ENCODE measurements at regions of chr15 and their contacts with region 1.

Region 1: GRCh38 chr15:75349851-75350588 is 3.2 kb downstream of the NEIL1 start:
- DNase-seq: peak; percentile 87 to 88
- ATAC-seq: peak; percentile 75 to 92 (median 86)
- H3K4me3 ChIP-seq: no peak overlapping the region
- H3K4me3 Mint-ChIP-seq: peak overlapping the region; percentile 86
- H3K27ac ChIP-seq: peak overlapping the region; percentile 98
- H3K27ac Mint-ChIP-seq: peak overlapping the region; percentile 95 to 97
- H3K4me1 ChIP-seq: peaks cover 53% of the 10 kb centered on the region
- H3K4me1 Mint-ChIP-seq: peaks cover 34 to 47% of the 10 kb centered on the region in 2 donors
- H3K27me3 ChIP-seq: no peaks in the 10 kb centered on the region
- H3K27me3 Mint-ChIP-seq: no peaks in the 10 kb centered on the region
- CTCF ChIP-seq: no peak

Region 2: GRCh38 chr15:75090388-75090734 is 259.7 kb before region 1 on chr15:
- intact Hi-C with region 1: no loop called
- DNase-seq: no peak
- ATAC-seq: peak in 1 of 3 donors; percentile 65
- H3K4me3 ChIP-seq: no peak overlapping the region
- H3K4me3 Mint-ChIP-seq: no peak overlapping the region
- H3K27ac ChIP-seq: no peak overlapping the region
- H3K27ac Mint-ChIP-seq: no peak overlapping the region
- H3K4me1 ChIP-seq: no peaks in the 10 kb centered on the region
- H3K4me1 Mint-ChIP-seq: no peaks in the 10 kb centered on the region
- H3K27me3 ChIP-seq: no peaks in the 10 kb centered on the region
- H3K27me3 Mint-ChIP-seq: no peaks in the 10 kb centered on the region
- CTCF ChIP-seq: no peak

Region 3: DNA sequence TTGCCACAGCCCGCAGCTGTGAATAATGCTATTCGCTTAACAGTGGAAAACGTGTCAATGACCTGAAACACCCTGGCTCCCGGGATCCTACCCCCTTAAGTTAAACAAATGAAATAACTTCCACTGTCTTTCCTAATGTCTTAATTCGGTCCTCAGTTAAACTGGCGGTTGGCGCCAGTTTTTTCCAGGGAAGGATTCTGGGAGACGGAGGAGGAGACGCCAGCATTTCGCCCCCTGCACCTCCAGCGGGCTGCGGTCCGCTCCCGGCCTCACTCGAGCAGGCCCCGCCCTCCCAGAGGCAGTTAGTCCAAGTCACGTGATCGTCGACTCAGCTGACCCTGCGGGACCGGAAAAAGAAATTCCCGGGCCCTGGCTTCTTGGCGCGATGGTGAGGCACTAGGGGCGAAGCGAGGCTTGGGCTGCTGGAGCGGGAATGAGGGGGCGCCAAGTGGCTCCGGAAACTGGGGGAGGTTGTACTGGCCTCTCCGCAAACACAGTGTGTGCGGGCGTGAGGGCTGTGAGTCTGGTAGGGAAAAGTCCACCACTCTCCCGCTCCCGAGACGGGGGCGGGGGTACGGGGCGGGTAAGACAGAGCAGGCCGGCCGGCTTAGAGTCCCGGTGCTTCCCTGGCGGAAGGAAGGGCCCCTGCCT is 14.2 kb before region 1 on chr15 and contains the start of gene COMMD4:
- intact Hi-C with region 1: loop called (anchors 2 kb)
- DNase-seq: peak; percentile 60 to 82
- ATAC-seq: peak; percentile 37 to 46 (median 40)
- H3K4me3 ChIP-seq: peak within 1 kb of the TSS; percentile 80
- H3K4me3 Mint-ChIP-seq: peak within 1 kb of the TSS; percentile 97
- H3K27ac ChIP-seq: peak within 1 kb of the TSS; percentile 29
- H3K27ac Mint-ChIP-seq: peak within 1 kb of the TSS; percentile 88 to 90
- H3K4me1 ChIP-seq: peaks cover 29% of the 10 kb centered on the region
- H3K4me1 Mint-ChIP-seq: peaks cover 25 to 46% of the 10 kb centered on the region in 2 donors
- H3K27me3 ChIP-seq: no peaks in the 10 kb centered on the region
- H3K27me3 Mint-ChIP-seq: no peaks in the 10 kb centered on the region
- CTCF ChIP-seq: no peak
- total RNA-seq, gene COMMD4: 38.8 to 56.3 (median 46.8) TPM

Region 4: GRCh38 chr15:75367913-75368688 is 18.1 kb after region 1 on chr15 and contains the start of gene MAN2C1:
- intact Hi-C with region 1: loop called (anchors 1 kb)
- DNase-seq: peak; percentile 85 to 97
- ATAC-seq: peak; percentile 92 to 95 (median 92)
- H3K4me3 ChIP-seq: peak within 1 kb of the TSS; percentile 57
- H3K4me3 Mint-ChIP-seq: peak within 1 kb of the TSS; percentile 89
- H3K27ac ChIP-seq: peak within 1 kb of the TSS; percentile 93
- H3K27ac Mint-ChIP-seq: peak within 1 kb of the TSS; percentile 90 to 92
- H3K4me1 ChIP-seq: peaks cover 16% of the 10 kb centered on the region
- H3K4me1 Mint-ChIP-seq: peaks cover 14 to 21% of the 10 kb centered on the region in 2 donors
- H3K27me3 ChIP-seq: no peaks in the 10 kb centered on the region
- H3K27me3 Mint-ChIP-seq: no peaks in the 10 kb centered on the region
- CTCF ChIP-seq: peak; percentile 14
- total RNA-seq, gene MAN2C1: 375 to 476 (median 385) TPM

Region 5: DNA sequence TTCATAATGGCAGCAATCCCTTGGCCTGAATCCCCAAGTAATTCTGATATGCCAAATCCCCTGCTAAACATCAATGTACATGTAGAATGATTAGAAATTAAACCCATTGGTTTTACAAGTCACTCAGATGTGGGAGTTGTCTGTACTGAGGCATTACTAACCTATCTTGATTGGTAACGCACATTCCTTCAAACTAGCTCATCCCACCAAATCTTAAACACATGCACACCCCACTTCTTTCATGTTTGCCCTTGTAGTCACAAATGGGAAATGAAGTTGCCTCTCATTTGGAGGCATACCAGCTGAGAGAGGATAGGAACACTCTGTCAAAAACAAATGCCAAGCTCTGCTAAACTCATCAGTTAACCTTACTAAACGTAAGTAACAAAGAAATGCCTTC is 47.5 kb after region 1 on chr15:
- intact Hi-C with region 1: no loop called
- DNase-seq: no peak
- ATAC-seq: no peak
- H3K4me3 ChIP-seq: no peak overlapping the region
- H3K4me3 Mint-ChIP-seq: no peak overlapping the region
- H3K27ac ChIP-seq: no peak overlapping the region
- H3K27ac Mint-ChIP-seq: peak overlapping the region; percentile 4 to 22
- H3K4me1 ChIP-seq: no peaks in the 10 kb centered on the region
- H3K4me1 Mint-ChIP-seq: peaks cover 19 to 21% of the 10 kb centered on the region in 2 donors
- H3K27me3 ChIP-seq: no peaks in the 10 kb centered on the region
- H3K27me3 Mint-ChIP-seq: no peaks in the 10 kb centered on the region
- CTCF ChIP-seq: no peak

Region 6: DNA sequence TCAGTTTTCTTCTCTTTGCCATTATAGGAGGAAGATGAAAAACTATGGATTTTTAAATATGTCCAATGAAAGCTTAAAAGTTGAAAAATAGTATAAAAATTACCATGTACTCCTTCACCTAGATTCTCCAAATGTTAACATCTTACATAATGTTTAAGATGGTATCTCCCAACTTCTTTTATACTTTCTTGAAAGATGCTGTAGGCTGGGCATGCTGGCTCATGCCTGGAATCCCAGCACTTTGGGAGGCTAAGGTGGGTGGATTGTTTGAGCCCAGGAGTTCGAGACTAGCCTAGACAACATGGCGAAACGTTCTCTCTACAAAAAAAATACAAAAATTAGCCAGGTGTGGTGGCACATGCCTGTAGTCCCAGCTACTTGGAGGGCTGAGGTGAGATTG is 93.2 kb after region 1 on chr15:
- intact Hi-C with region 1: no loop called
- DNase-seq: no peak
- ATAC-seq: no peak
- H3K4me3 ChIP-seq: no peak overlapping the region
- H3K4me3 Mint-ChIP-seq: no peak overlapping the region
- H3K27ac ChIP-seq: no peak overlapping the region
- H3K27ac Mint-ChIP-seq: no peak overlapping the region
- H3K4me1 ChIP-seq: peaks cover 6% of the 10 kb centered on the region
- H3K4me1 Mint-ChIP-seq: peaks cover 25 to 35% of the 10 kb centered on the region in 2 donors
- H3K27me3 ChIP-seq: no peaks in the 10 kb centered on the region
- H3K27me3 Mint-ChIP-seq: no peaks in the 10 kb centered on the region
- CTCF ChIP-seq: no peak

Region 7: GRCh38 chr15:75453703-75454470 is 103.9 kb after region 1 on chr15:
- intact Hi-C with region 1: loop called (anchors 1 kb)
- DNase-seq: peak; percentile 97 to 99
- ATAC-seq: peak; percentile 43 to 67 (median 51)
- H3K4me3 ChIP-seq: peak overlapping the region; percentile 92
- H3K4me3 Mint-ChIP-seq: peak overlapping the region; percentile 98
- H3K27ac ChIP-seq: peak overlapping the region; percentile 96
- H3K27ac Mint-ChIP-seq: peak overlapping the region; percentile 98 to 99
- H3K4me1 ChIP-seq: peaks cover 38% of the 10 kb centered on the region
- H3K4me1 Mint-ChIP-seq: peaks cover 45 to 49% of the 10 kb centered on the region in 2 donors
- H3K27me3 ChIP-seq: no peaks in the 10 kb centered on the region
- H3K27me3 Mint-ChIP-seq: no peaks in the 10 kb centered on the region
- CTCF ChIP-seq: no peak

Region 8: DNA sequence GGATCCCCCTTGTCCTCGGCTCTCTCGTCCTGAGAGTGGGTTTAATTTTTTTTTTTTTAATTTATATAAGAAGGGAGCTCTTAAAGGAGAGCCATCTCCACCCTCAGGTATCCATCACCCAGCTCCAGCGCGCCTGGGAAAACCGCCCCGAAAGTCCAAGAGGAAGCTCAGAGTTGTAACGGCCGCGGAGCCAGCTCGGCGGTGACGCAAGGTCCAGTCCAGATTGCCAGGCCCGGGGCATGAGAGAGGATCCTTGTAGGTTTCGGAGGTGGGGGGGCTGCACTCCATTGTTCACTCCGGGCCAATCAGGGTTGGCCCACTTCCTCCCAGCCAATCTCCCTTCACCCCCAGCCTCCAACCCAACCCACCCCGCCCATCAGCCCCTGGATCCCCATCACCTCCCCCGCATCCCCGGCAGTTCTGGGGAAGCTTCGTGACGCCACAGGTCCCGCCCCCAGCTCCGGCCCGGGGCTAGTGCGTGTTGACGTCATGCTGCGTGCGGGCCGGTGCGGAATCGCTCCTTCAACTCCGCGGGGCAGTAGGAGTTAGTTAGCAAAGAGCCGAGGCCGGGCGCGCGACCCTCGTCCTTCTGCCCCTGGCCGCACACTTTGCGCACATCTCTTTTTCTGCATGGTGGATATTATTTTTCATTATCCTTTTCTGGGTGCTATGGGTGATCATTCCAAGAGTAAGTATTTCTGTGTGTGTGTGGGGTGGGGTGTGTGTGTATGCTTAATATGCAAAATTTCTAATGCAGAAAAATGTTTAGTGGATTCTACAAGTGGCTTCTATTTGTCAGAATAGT is 986.4 kb after region 1 on chr15 and contains the start of gene ISL2:
- intact Hi-C with region 1: no loop called
- DNase-seq: peak in 1 of 2 donors; percentile 74
- ATAC-seq: peak in 2 of 3 donors; percentile 15 to 36
- H3K4me3 ChIP-seq: peak within 1 kb of the TSS; percentile 8
- H3K4me3 Mint-ChIP-seq: peak within 1 kb of the TSS; percentile 84
- H3K27ac ChIP-seq: no peak within 1 kb of the TSS
- H3K27ac Mint-ChIP-seq: peak within 1 kb of the TSS; percentile 35 to 52
- H3K4me1 ChIP-seq: peaks cover 67% of the 10 kb centered on the region
- H3K4me1 Mint-ChIP-seq: peaks cover 52 to 61% of the 10 kb centered on the region in 2 donors
- H3K27me3 ChIP-seq: peaks cover 62% of the 10 kb centered on the region
- H3K27me3 Mint-ChIP-seq: peaks cover 65 to 71% of the 10 kb centered on the region in 2 donors
- CTCF ChIP-seq: no peak
- total RNA-seq, gene ISL2: not detected

Measured in natural killer cell (primary cell).